ENCODE measurements at regions of chrX and their contacts with region 1.

Region 1: GRCh38 chrX:72126539-72127140 is 5.1 kb downstream of the RTL5 start:
- DNase-seq: peak; percentile 66
- H3K4me3 Mint-ChIP-seq: no peak overlapping the region
- H3K27ac Mint-ChIP-seq: no peak overlapping the region
- H3K4me1 Mint-ChIP-seq: peaks cover 19% of the 10 kb centered on the region
- H3K27me3 Mint-ChIP-seq: peaks cover 40% of the 10 kb centered on the region

Region 2: DNA sequence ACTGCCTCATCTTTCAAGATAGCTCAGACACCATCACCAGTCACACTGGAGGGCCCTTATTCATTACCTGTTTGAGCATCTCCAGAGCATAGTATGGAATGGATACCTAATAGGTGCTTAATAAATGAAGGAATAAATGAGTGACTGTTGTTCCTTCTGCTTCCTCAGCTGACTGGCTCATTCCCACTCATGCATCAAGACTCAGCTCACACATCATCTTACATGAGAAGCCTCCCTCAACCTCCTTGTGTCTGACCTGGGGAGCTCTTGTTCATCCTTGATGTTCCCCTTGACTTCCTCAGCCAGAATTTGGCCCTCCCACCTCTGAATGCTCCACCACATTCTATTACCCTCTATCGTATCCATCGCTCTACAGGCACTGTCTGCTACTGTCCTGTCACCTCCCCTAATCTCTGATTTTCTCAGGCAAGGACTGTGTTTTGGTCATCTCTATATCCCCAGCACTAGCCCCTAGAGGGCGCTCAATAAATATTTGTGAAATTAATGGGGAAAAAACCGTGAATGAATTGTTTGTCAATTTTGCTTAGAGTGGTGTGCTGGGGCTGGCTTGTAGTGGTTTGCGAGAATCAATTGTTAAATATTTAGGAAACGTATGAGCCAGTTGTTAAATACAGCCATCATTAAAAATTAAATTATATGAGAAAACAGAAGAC is 127.7 kb before region 1 on chrX:
- intact Hi-C with region 1: loop called (anchors 1 kb)
- DNase-seq: no peak
- H3K4me3 Mint-ChIP-seq: no peak overlapping the region
- H3K27ac Mint-ChIP-seq: no peak overlapping the region
- H3K4me1 Mint-ChIP-seq: no peaks in the 10 kb centered on the region
- H3K27me3 Mint-ChIP-seq: peaks cover 23% of the 10 kb centered on the region

Region 3: DNA sequence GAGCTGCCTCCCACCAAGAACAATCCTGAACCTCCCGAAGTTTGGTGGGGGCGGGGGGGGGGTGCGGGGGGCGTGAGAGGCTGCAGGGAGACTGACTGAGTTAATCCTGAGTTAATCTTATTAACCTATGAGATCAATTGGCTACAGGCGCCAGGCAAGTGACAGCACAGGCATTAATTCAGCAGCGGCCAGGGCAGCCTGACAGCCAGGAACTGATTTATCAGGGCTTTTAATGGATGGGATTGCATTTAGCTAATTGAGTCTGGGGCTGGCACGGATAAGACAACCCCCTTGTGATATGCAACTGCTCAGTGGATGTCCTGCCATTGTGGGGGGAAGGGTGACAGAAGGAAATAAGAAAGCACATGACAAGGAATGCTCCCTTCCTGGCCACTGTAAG is 11.3 kb before region 1 on chrX:
- intact Hi-C with region 1: no loop called
- DNase-seq: no peak
- H3K4me3 Mint-ChIP-seq: no peak overlapping the region
- H3K27ac Mint-ChIP-seq: no peak overlapping the region
- H3K4me1 Mint-ChIP-seq: peaks cover 1% of the 10 kb centered on the region
- H3K27me3 Mint-ChIP-seq: peaks cover 30% of the 10 kb centered on the region

Measured in activated T-helper 2 cell treated with anti-CD3 and anti-CD28 coated beads, Interferon-gamma antibody, Interleukin-2, Interleukin-4, amounts not matched to agents 10 μg/mL and 5 μg/mL and 100 μg/mL, durations not matched to agents 14 hours and 24 hours and 36 hours (primary cell).